Activated CD4-positive, alpha-beta T cell treated with anti-CD3 and anti-CD28 coated beads for 36 hours (primary cell): ENCODE measurements at regions of chr7 and their contacts with region 1.

Region 1: GRCh38 chr7:150322833-150323681 is at the starts of genes ACTR3C and LRRC61:
- DNase-seq: peak; percentile 78
- ATAC-seq: peak; percentile 24
- H3K4me3 Mint-ChIP-seq: peak within 1 kb of the TSS; percentile 91
- H3K27ac Mint-ChIP-seq: peak within 1 kb of the TSS; percentile 99
- H3K4me1 Mint-ChIP-seq: peaks cover 52% of the 10 kb centered on the region
- H3K27me3 Mint-ChIP-seq: no peaks in the 10 kb centered on the region
- total RNA-seq, gene ACTR3C: 3.2 to 4.7 TPM
- total RNA-seq, gene LRRC61: 13.0 to 17.4 TPM

Region 2: GRCh38 chr7:149245244-149245643 is 1077.8 kb before region 1 on chr7:
- CTCF ChIA-PET with region 1: no interaction called
- POLR2A ChIA-PET with region 1: no interaction called
- intact Hi-C with region 1: loop called in 1 of 2 experiments (anchors 5 kb)
- DNase-seq: peak; percentile 79
- ATAC-seq: peak; percentile 85
- H3K4me3 Mint-ChIP-seq: peak overlapping the region; percentile 48
- H3K27ac Mint-ChIP-seq: peak overlapping the region; percentile 96
- H3K4me1 Mint-ChIP-seq: peaks cover 72% of the 10 kb centered on the region
- H3K27me3 Mint-ChIP-seq: no peaks in the 10 kb centered on the region

Region 3: DNA sequence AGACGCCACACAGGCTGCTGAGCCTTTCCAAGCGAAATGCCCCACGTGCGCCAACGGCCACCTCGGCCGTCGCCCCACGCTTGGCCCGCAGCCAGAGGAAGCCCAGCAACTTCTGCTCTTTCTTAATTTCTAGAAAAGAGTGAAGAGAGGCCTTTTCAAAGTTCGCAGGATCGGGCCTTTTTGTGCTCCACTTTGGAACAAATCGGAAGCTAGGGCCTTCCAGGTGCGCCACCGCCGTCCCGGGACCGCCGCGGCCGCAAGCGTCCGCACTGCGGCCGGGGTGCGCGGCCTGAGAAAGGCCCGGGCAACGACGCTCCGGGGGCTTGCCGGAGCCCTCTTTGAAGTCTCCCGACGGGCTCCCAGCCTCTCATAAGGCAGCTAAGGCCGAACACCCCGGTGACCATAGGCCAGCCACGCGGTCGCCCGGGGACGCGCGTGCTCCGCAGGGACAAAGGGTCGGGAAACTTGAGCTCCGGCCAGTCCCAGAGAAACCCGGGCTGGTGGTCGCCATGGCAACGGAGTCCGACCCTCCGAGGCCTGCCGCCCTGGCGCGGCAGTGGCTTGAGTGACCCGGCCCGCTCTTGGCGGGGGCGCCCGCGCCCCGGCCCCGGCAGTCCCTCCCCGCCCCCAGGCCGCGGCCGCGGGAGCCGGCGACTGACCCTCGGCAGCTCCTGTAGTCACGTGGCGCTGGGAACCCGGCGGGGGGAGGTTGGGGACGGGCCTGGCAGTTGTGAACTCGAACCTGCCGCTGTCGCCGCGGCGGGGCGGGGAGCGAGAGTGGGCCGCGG is 45.2 kb after region 1 on chr7 and contains the start of gene REPIN1:
- CTCF ChIA-PET with region 1: no interaction called
- POLR2A ChIA-PET with region 1: no interaction called
- intact Hi-C with region 1: loop called in 1 of 2 experiments (anchors 2 kb)
- DNase-seq: peak; percentile 88
- ATAC-seq: peak; percentile 63
- H3K4me3 Mint-ChIP-seq: peak within 1 kb of the TSS; percentile 90
- H3K27ac Mint-ChIP-seq: peak within 1 kb of the TSS; percentile 97
- H3K4me1 Mint-ChIP-seq: peaks cover 37% of the 10 kb centered on the region
- H3K27me3 Mint-ChIP-seq: no peaks in the 10 kb centered on the region
- total RNA-seq, gene REPIN1: 48.2 to 55.6 TPM

Region 4: DNA sequence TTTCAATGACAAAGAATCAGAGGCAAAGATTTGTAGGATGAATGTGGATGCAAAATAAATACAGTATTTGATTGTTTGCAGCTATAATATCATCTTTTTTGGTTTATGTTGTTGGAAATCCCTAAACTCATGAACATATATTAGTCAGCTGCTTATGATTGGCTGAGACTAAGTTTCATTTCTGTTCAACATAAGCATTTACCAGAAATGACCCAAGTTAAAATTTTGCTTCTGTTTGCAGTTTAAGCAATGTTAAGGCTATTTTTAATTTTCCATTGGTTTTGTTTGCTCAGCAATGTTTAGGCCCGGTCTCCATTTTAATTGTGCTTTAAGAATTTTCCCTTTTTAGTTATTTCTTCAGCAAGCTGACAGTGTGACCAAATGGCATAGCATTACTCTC is 287.2 kb after region 1 on chr7:
- CTCF ChIA-PET with region 1: no interaction called
- POLR2A ChIA-PET with region 1: no interaction called
- intact Hi-C with region 1: no loop called
- DNase-seq: no peak
- ATAC-seq: peak; percentile 70
- H3K4me3 Mint-ChIP-seq: no peak overlapping the region
- H3K27ac Mint-ChIP-seq: peak overlapping the region; percentile 91
- H3K4me1 Mint-ChIP-seq: peaks cover 56% of the 10 kb centered on the region
- H3K27me3 Mint-ChIP-seq: no peaks in the 10 kb centered on the region

Region 5: DNA sequence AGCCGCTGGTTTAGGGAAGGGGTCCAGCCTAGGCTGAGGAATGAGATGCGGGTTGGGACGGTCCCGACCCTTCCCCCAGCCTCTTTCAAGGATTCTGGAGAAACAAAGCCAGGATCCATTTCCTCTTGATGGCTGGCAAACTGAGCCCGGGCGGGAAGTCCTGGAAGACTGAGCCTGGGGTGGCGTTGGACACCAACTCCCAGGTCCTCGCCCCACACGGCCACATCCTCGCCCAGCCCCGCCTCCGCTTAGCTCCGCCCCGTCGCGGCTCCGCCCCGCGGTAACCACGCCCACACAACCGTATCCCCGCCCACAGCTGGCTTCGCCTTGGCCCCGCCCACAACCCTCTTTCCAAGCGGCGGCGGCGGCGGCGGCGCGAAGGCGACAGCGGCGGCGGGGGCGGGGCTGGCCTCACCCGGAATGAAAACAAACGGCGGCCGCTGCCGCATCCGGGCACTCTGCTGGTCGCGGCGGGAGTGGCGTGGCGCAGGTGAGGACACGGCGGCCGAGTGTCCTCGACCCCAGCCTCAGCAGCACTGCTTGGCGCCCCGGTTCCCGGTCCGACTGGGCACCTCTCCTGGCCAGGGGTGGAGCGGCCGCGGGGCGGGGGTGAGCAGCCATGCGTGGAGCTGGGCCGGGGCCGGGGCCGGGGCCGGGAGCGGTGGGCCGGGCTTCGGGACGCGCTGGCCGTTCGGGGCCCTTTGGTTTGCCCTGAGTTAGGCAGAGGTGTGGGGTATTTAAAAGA is 1018.5 kb after region 1 on chr7 and contains the start of gene NUB1:
- CTCF ChIA-PET with region 1: no interaction called
- POLR2A ChIA-PET with region 1: no interaction called
- intact Hi-C with region 1: loop called in 1 of 2 experiments (anchors 5 kb)
- DNase-seq: peak; percentile 96
- ATAC-seq: peak; percentile 82
- H3K4me3 Mint-ChIP-seq: peak within 1 kb of the TSS; percentile 76
- H3K27ac Mint-ChIP-seq: peak within 1 kb of the TSS; percentile 78
- H3K4me1 Mint-ChIP-seq: peaks cover 46% of the 10 kb centered on the region
- H3K27me3 Mint-ChIP-seq: no peaks in the 10 kb centered on the region
- total RNA-seq, gene NUB1: 51.4 to 70.4 TPM